Heart left ventricle (tissue), 16 donors: ENCODE measurements at regions of chr7 and their contacts with region 1.

Region 1: GRCh38 chr7:133139350-133139749 is 57.5 kb upstream of the CHCHD3 start:
- DNase-seq: no peak
- ATAC-seq: peak in 1 of 4 donors; percentile 45
- H3K4me3 ChIP-seq: no peak overlapping the region
- H3K27ac ChIP-seq: no peak overlapping the region
- H3K4me1 ChIP-seq: no peaks in the 10 kb centered on the region
- H3K27me3 ChIP-seq: peaks cover 0 to 7% (median 0%) of the 10 kb centered on the region in 9 donors
- CTCF ChIP-seq: peak in 3 of 12 donors; percentile 8 to 27 (median 23)
- POLR2A ChIP-seq: no peak

Region 2: DNA sequence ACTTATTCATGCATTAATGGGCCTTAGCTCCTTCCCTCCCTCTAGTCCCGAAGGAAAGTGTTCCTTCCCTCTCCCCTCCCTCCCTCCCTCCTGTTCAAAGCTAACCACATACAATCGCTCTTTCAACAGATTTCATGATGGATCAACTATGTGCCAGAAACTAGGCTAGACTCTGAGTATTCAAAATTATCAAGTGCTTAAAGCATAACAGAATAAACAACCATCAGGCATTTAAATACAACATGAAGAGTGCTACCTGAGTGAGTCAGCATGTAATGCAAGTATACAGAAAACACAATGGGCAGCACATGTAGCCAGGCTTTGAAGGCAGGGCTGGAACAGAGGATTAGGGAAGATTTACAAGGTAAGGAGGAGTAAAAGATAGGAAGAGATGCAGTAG is 68.8 kb before region 1 on chr7:
- intact Hi-C with region 1: no loop called
- DNase-seq: no peak
- ATAC-seq: peak in 1 of 4 donors; percentile 26
- H3K4me3 ChIP-seq: no peak overlapping the region
- H3K27ac ChIP-seq: no peak overlapping the region
- H3K4me1 ChIP-seq: peaks cover 0 to 43% (median 9%) of the 10 kb centered on the region in 12 donors
- H3K27me3 ChIP-seq: no peaks in the 10 kb centered on the region
- CTCF ChIP-seq: no peak
- POLR2A ChIP-seq: no peak

Region 3: GRCh38 chr7:133196856-133197612 is 57.7 kb after region 1 on chr7:
- intact Hi-C with region 1: loop called in 1 of 10 experiments (anchors 10 kb)
- DNase-seq: no peak
- ATAC-seq: no peak
- H3K4me3 ChIP-seq: no peak overlapping the region
- H3K27ac ChIP-seq: no peak overlapping the region
- H3K4me1 ChIP-seq: no peaks in the 10 kb centered on the region
- H3K27me3 ChIP-seq: peaks cover 0 to 5% (median 0%) of the 10 kb centered on the region in 9 donors
- CTCF ChIP-seq: no peak
- POLR2A ChIP-seq: no peak